Panc1 (cell line): ENCODE measurements at regions of chr10 and their contacts with region 1.

Region 1: GRCh38 chr10:95363303-95363912 is 72.6 kb upstream of the PDLIM1 start:
- DNase-seq: peak; percentile 51
- ATAC-seq: peak; percentile 85
- H3K4me3 ChIP-seq: no peak overlapping the region
- H3K27ac ChIP-seq: no peak overlapping the region
- H3K4me1 ChIP-seq: no peaks in the 10 kb centered on the region; the same call in 1 of the 2 replicates
- H3K27me3 ChIP-seq: no peaks in the 10 kb centered on the region
- CTCF ChIP-seq: peak; percentile 86; the same call in 1 of the 2 replicates

Region 2: GRCh38 chr10:94630017-94630688 is 733.3 kb before region 1 on chr10:
- CTCF ChIA-PET with region 1: no interaction called
- POLR2A ChIA-PET with region 1: no interaction called
- in situ Hi-C with region 1: no loop called
- intact Hi-C with region 1: loop called (anchors 5 kb)
- DNase-seq: peak; percentile 28
- ATAC-seq: peak; percentile 65
- H3K4me3 ChIP-seq: no peak overlapping the region
- H3K27ac ChIP-seq: no peak overlapping the region
- H3K4me1 ChIP-seq: no peaks in the 10 kb centered on the region
- H3K27me3 ChIP-seq: no peaks in the 10 kb centered on the region
- CTCF ChIP-seq: peak; percentile 69

Region 3: GRCh38 chr10:95133016-95133752 is 230.2 kb before region 1 on chr10:
- CTCF ChIA-PET with region 1: no interaction called
- POLR2A ChIA-PET with region 1: no interaction called
- in situ Hi-C with region 1: no loop called
- intact Hi-C with region 1: loop called (anchors 1 kb)
- DNase-seq: peak; percentile 66
- ATAC-seq: peak; percentile 90
- H3K4me3 ChIP-seq: no peak overlapping the region
- H3K27ac ChIP-seq: no peak overlapping the region
- H3K4me1 ChIP-seq: no peaks in the 10 kb centered on the region
- H3K27me3 ChIP-seq: no peaks in the 10 kb centered on the region
- CTCF ChIP-seq: peak; percentile 87

Region 4: DNA sequence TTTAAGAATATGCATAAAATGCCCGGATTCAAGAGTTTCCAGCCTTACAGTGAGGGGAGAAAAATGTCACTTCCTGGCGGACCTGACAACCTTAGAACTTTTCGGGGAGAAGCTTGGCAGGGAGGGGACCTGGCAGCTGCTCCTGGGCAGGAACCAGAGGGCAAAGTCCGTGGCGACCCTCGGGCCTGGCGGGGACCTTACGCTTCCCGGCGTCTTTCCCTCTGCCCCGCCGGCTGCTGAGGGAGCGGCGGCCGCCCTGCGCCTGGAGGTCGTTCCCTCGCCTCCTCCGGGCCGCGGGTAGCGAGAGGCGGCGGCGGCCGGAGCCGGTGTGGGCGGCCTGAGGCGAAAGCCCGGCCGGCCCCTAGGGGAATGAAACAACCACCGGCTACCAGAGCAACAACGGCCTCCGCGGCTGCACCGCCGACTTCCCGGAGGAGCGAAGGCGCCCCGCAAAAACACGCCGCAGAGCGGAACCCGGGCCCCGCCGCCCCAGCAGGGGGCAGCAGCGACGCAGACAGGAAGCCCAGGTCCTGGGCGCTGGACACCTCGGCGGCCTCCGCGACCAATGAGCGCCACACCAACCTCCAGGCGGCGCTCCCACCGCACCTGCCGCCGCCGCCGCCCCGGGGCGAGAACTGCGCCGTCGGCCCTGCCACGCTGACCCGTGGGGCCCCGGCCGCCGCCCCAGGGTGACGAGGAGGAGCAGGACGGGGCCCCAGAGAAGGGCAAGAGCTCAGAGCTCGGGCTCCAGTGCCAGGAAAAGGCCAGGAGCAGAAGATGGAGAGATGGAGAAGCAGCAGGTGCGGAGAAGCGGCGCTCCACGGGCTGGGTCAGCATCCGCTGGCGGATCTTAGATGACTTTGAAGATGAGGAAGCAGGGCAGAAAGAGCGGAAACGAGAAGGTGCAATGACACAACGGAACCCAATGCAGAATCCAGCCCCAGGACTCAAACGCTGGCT is 179.9 kb before region 1 on chr10:
- CTCF ChIA-PET with region 1: interaction called, 3 read pairs
- POLR2A ChIA-PET with region 1: no interaction called
- in situ Hi-C with region 1: no loop called
- intact Hi-C with region 1: loop called (anchors 1 kb)
- DNase-seq: no peak
- ATAC-seq: peak; percentile 100
- H3K4me3 ChIP-seq: peak overlapping the region; percentile 63 to 79
- H3K27ac ChIP-seq: peak overlapping the region; percentile 92
- H3K4me1 ChIP-seq: peaks cover 3% of the 10 kb centered on the region; the same call in 1 of the 2 replicates
- H3K27me3 ChIP-seq: peaks cover 5% of the 10 kb centered on the region; the same call in 1 of the 2 replicates
- CTCF ChIP-seq: peak; percentile 100

Region 5: DNA sequence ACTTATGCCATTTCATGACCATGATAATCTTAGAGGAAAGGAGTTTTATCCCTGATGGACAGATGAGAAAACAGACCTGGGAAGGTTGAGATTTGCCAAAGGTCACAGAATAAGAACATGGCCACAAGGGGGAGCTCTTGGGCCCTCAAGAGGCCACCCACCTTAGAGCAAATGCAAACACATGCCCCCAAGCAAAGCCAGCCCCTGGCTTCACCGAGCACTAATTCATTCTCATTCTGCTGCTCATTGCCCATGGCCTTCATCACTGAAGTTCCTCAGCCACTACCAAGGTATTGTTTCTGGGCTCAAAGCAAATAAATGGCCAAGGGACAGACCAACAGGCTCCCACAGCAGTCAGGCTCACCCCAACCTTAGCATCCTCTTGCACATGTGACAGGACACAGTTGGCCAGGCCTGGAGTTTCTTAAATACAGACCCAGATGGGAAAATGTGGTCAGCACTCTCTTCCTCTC is 116.8 kb before region 1 on chr10:
- CTCF ChIA-PET with region 1: interaction called, 30 read pairs
- POLR2A ChIA-PET with region 1: no interaction called
- in situ Hi-C with region 1: no loop called
- intact Hi-C with region 1: loop called (anchors 1 kb)
- DNase-seq: no peak
- ATAC-seq: peak; percentile 84
- H3K4me3 ChIP-seq: no peak overlapping the region
- H3K27ac ChIP-seq: no peak overlapping the region
- H3K4me1 ChIP-seq: peaks cover 30% of the 10 kb centered on the region
- H3K27me3 ChIP-seq: no peaks in the 10 kb centered on the region
- CTCF ChIP-seq: peak; percentile 95

Region 6: GRCh38 chr10:95290461-95291364 is 72.7 kb before region 1 on chr10 and contains the start of gene PDLIM1:
- CTCF ChIA-PET with region 1: no interaction called
- POLR2A ChIA-PET with region 1: no interaction called
- in situ Hi-C with region 1: no loop called
- intact Hi-C with region 1: loop called (anchors 5 kb)
- DNase-seq: no peak
- ATAC-seq: peak; percentile 91
- H3K4me3 ChIP-seq: peak within 1 kb of the TSS; percentile 78 to 83
- H3K27ac ChIP-seq: peak within 1 kb of the TSS; percentile 88
- H3K4me1 ChIP-seq: peaks cover 70% of the 10 kb centered on the region
- H3K27me3 ChIP-seq: no peaks in the 10 kb centered on the region
- CTCF ChIP-seq: no peak
- total RNA-seq, gene PDLIM1: 183 TPM